ENCODE measurements at regions of chr19 and their contacts with region 1.

Region 1: DNA sequence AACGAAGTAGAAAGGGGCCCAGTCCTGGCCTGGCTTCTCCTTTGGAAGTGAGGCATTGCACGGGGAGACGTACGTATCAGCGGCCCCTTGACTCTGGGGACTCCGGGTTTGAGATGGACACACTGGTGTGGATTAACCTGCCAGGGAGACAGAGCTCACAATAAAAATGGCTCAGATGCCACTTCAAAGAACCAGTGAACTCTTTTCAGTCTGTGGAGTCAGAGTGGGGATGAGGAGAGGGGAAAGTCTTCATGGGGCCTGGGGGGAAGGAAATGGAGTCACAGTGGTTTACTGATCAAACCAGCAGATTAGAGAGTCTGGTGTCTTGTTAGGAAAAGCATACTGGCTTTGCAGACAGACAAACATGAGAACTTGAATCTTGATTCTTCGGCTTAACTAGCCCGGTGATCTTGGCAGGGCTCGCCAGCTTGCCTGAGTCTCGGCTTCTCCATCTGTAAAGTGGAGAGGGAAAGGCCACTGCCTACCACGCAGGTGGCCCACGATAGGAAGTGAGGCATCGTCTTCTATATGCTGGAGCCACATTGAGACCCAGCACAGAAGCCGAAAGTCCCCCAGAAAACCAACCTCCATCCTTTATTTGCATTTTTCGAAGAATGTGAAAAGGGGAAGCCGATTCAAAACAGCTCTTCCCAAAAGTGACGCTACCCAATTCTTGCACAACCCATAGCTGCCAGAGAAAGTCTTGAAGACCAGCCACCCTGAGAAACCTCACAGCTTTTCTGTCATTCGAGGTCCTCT is at the start of gene FFAR1:
- DNase-seq: peak; percentile 42
- H3K4me3 Mint-ChIP-seq: peak within 1 kb of the TSS; percentile 74
- H3K27ac Mint-ChIP-seq: peak within 1 kb of the TSS; percentile 99
- H3K4me1 Mint-ChIP-seq: peaks cover 37% of the 10 kb centered on the region
- H3K27me3 Mint-ChIP-seq: peaks cover 4% of the 10 kb centered on the region
- total RNA-seq, gene FFAR1: 0.12 and 0.18 TPM in 2 replicates

Region 2: GRCh38 chr19:34662919-34663318 is 684.4 kb before region 1 on chr19:
- intact Hi-C with region 1: no loop called
- DNase-seq: peak; percentile 31
- H3K4me3 Mint-ChIP-seq: no peak overlapping the region
- H3K27ac Mint-ChIP-seq: no peak overlapping the region
- H3K4me1 Mint-ChIP-seq: peaks cover 9% of the 10 kb centered on the region
- H3K27me3 Mint-ChIP-seq: no peaks in the 10 kb centered on the region

Region 3: GRCh38 chr19:35204799-35205732 is 142.3 kb before region 1 on chr19:
- intact Hi-C with region 1: loop called (anchors 5 kb)
- DNase-seq: no peak
- H3K4me3 Mint-ChIP-seq: peak overlapping the region; percentile 61
- H3K27ac Mint-ChIP-seq: peak overlapping the region; percentile 95
- H3K4me1 Mint-ChIP-seq: peaks cover 63% of the 10 kb centered on the region
- H3K27me3 Mint-ChIP-seq: no peaks in the 10 kb centered on the region

Region 4: GRCh38 chr19:35295792-35296462 is 51.4 kb before region 1 on chr19:
- intact Hi-C with region 1: loop called (anchors 2 kb)
- DNase-seq: peak; percentile 21
- H3K4me3 Mint-ChIP-seq: no peak overlapping the region
- H3K27ac Mint-ChIP-seq: no peak overlapping the region
- H3K4me1 Mint-ChIP-seq: no peaks in the 10 kb centered on the region
- H3K27me3 Mint-ChIP-seq: peaks cover 8% of the 10 kb centered on the region

Region 5: DNA sequence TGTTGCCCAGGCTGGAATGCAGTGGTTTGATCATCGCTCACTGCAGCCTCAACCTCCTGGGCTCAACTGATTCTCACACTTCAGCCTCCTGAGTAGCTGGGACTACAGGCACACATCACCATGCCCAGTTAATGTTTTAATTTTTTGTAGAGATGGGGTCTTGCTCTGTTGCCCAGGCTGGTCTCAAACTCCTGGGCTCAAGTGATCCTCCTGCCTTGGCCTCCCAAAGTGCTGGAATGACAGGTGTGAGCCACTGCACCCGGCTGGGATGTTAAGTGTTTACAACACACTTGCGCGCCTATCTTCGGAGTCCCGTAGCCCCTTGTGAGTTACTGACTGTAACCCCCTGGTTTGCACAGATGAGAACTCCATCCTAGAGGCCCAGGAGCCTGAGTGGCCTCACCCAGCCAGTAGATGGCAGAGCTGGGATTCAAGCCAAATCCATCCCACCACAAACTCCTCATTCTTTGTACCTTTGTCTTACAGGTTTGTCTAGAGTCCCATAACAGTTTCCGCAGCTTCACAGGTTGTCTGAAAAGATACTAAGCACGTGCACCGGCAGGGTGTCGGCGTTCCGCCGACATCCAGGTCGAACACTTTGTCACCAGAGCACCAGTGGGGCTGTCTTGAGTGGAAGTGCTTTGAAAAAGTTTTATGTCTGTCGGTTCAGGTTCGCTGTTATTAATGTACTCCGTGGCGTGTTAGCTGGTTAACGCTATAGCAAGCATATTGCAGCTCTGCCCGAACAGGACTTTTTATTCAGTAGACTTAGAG is 40.7 kb before region 1 on chr19:
- intact Hi-C with region 1: loop called (anchors 2 kb)
- DNase-seq: no peak
- H3K4me3 Mint-ChIP-seq: no peak overlapping the region
- H3K27ac Mint-ChIP-seq: no peak overlapping the region
- H3K4me1 Mint-ChIP-seq: no peaks in the 10 kb centered on the region
- H3K27me3 Mint-ChIP-seq: peaks cover 2% of the 10 kb centered on the region

Region 6: GRCh38 chr19:35330475-35330874 is 16.9 kb before region 1 on chr19:
- intact Hi-C with region 1: no loop called
- DNase-seq: no peak
- H3K4me3 Mint-ChIP-seq: no peak overlapping the region
- H3K27ac Mint-ChIP-seq: no peak overlapping the region
- H3K4me1 Mint-ChIP-seq: peaks cover 38% of the 10 kb centered on the region
- H3K27me3 Mint-ChIP-seq: no peaks in the 10 kb centered on the region

Region 7: DNA sequence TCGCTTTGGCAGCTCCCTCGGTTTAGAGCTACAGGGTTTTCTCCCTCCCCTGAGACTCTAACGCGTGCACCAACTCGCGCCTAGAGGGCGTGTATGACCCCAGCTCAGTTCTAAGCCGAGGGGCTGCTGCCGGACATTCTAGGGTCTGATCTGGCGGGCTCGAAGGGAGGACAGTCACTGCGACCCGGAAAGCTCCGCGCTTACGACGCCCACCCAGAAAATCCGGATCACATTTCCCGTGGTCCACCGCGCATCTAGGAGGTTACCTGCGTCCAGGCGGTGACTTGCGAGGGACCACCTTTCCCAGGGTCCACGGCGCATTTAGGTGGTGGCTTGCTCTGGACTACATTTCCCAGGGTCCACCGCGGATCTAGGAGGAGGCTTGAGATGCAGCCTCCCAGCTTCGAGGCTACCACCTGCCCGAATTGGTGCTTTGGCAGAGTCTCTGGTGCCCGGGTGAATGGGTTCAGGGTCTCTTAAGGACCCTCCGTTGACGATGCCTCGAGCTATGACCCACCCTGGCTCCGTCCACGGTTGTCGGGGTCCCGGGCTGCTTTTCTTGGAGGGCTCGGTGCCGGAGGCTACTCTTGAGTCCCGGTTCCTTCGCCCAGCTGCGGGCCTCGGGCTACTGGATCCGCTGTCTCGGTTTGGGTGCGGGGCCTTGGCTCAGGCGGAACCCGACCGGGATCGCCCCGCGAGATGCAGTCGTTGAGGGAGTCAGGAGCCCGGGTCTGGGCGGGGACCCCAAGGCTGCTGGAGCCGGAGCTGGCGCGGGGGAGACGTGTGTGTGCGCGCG is 898.1 kb after region 1 on chr19:
- intact Hi-C with region 1: no loop called
- DNase-seq: no peak
- H3K4me3 Mint-ChIP-seq: no peak overlapping the region
- H3K27ac Mint-ChIP-seq: no peak overlapping the region
- H3K4me1 Mint-ChIP-seq: no peaks in the 10 kb centered on the region
- H3K27me3 Mint-ChIP-seq: no peaks in the 10 kb centered on the region